Activated naive CD4-positive, alpha-beta T cell treated with anti-CD3 and anti-CD28 coated beads for 36 hours (primary cell): ENCODE measurements at regions of chr15 and their contacts with region 1.

Region 1: DNA sequence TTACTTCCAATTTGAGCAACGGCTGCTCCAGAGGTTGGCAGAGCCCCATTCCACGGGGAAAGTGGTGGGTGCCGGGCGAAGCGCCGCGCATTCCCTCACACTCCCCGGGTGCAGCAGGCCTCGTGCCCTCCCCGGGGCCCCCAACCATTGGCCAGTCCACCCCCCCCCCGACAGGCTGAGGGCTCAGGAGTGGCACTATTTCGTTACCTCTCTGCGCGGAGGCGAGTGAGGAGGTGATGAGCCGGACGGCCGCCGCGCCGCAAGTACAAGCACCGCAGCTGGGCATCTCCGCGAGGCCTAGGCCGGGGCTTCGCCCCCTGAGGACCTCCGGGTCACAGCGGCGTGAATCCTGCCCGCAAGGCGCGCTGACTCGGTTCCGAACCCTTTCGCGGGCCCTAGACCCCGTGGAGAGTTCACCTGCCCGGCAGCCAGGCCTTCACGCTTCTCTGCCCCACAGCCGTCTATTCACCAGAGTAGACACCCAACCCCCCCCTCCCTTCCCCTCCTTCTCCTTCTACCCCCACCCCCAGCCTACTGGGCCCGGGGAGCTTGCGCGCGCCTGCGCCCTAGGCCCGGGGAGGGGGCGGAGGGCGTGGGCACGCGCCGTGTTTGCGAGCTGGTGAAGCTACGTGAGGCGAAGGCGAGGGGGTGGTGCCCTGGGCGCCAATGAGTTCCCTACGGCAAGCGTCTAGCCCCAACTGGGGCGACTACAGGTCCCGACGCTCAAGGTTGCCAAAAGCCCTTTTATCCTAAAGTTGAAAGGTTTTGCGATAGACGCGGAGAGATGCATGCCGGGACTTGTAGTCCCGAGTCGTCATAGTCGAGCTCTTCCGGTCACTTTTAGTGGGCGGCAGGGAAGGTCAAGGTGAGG is at the start of gene CLPX:
- DNase-seq: peak; percentile 88
- H3K4me3 Mint-ChIP-seq: peak within 1 kb of the TSS; percentile 96
- H3K27ac Mint-ChIP-seq: peak within 1 kb of the TSS; percentile 94
- H3K4me1 Mint-ChIP-seq: peaks cover 23% of the 10 kb centered on the region
- H3K27me3 Mint-ChIP-seq: no peaks in the 10 kb centered on the region
- total RNA-seq, gene CLPX: 62.7 to 69.9 TPM

Region 2: DNA sequence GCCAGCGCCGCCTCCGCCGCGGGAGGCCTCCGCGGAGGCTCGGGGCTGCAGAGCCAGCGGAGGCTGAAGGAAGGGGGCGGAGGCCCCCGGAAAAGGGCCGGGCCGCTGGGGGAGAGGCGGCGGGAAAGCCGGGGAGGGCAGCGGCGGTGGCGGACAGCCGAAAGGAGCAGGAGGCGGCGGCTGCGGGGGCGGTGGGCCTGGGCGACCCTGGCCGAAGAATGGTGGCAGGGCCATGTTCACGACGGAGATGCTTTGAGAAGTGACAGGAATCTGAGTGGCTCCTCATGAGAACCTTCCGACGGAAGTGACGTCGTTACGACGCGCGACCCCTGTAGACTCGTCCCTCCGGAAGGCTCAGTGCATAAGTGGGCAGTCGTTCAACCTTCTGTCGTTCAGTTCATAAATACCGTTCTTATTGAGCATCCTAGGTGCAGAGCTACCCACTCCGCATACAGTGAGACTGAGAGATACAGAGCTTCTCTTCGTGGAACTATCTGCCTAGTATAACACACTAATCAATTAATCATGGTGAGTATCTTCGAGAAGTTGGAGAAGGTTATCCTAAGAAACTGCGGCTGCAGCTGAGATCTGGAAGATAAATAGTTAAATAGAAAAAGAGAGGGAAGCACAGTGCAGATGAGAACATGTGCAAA is 51.4 kb before region 1 on chr15 and contains the start of gene PDCD7:
- CTCF ChIA-PET with region 1: no interaction called
- intact Hi-C with region 1: loop called (anchors 1 kb)
- DNase-seq: peak; percentile 90
- H3K4me3 Mint-ChIP-seq: peak within 1 kb of the TSS; percentile 85
- H3K27ac Mint-ChIP-seq: peak within 1 kb of the TSS; percentile 82
- H3K4me1 Mint-ChIP-seq: peaks cover 23% of the 10 kb centered on the region
- H3K27me3 Mint-ChIP-seq: no peaks in the 10 kb centered on the region
- total RNA-seq, gene PDCD7: 28.6 to 31.5 TPM

Region 3: GRCh38 chr15:65275728-65276126 is 90.6 kb after region 1 on chr15:
- CTCF ChIA-PET with region 1: interaction called, 16 read pairs
- intact Hi-C with region 1: loop called (anchors 1 kb)
- DNase-seq: no peak
- H3K4me3 Mint-ChIP-seq: no peak overlapping the region
- H3K27ac Mint-ChIP-seq: peak overlapping the region; percentile 38
- H3K4me1 Mint-ChIP-seq: peaks cover 34% of the 10 kb centered on the region
- H3K27me3 Mint-ChIP-seq: no peaks in the 10 kb centered on the region

Region 4: GRCh38 chr15:65304389-65305144 is 119.5 kb after region 1 on chr15 and contains the start of gene RNU5B-1:
- CTCF ChIA-PET with region 1: no interaction called
- intact Hi-C with region 1: loop called (anchors 1 kb)
- DNase-seq: peak; percentile 86
- H3K4me3 Mint-ChIP-seq: peak within 1 kb of the TSS; percentile 89
- H3K27ac Mint-ChIP-seq: peak within 1 kb of the TSS; percentile 97
- H3K4me1 Mint-ChIP-seq: peaks cover 24% of the 10 kb centered on the region
- H3K27me3 Mint-ChIP-seq: peaks cover 4% of the 10 kb centered on the region
- total RNA-seq, gene RNU5B-1: not detected